SK-N-SH (cell line): ENCODE measurements at regions of chr12 and their contacts with region 1.

Region 1: DNA sequence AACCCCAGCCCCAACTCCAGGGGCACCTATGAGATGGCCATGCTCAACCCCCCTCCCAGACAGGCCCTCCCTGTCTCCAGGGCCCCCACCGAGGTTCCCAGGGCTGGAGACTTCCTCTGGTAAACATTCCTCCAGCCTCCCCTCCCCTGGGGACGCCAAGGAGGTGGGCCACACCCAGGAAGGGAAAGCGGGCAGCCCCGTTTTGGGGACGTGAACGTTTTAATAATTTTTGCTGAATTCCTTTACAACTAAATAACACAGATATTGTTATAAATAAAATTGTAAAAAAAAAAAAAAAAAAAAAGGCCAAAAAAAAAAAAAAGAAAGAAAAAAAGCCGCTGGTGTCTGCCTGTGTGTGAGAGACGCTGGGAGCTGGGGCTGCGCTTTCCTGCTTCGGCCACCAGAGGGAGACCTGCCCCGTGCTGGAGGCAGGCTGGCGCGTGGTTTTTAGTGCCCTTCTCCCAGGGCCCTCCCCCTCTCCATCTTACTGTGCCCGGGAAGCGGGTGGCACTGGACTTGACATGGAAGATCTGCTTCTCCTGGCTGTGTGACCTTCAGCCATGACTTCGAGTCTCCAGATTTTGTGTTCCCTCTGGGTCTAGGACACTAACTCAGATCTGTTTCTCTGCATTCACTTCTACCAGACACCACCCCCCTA is 3.4 kb upstream of the NXPH4 start:
- DNase-seq: peak; percentile 96
- H3K4me3 ChIP-seq: no peak overlapping the region; a peak in 1 of 4 replicates
- H3K27ac ChIP-seq: no peak overlapping the region
- H3K4me1 ChIP-seq: peaks cover 0 to 27% of the 10 kb centered on the region in 2 experiments; a peak in 1 of 4 replicates
- H3K27me3 ChIP-seq: peaks cover 14% of the 10 kb centered on the region
- CTCF ChIP-seq: peak; percentile 92
- EP300 ChIP-seq: no peak
- RAD21 ChIP-seq: peak; percentile 81

Region 2: DNA sequence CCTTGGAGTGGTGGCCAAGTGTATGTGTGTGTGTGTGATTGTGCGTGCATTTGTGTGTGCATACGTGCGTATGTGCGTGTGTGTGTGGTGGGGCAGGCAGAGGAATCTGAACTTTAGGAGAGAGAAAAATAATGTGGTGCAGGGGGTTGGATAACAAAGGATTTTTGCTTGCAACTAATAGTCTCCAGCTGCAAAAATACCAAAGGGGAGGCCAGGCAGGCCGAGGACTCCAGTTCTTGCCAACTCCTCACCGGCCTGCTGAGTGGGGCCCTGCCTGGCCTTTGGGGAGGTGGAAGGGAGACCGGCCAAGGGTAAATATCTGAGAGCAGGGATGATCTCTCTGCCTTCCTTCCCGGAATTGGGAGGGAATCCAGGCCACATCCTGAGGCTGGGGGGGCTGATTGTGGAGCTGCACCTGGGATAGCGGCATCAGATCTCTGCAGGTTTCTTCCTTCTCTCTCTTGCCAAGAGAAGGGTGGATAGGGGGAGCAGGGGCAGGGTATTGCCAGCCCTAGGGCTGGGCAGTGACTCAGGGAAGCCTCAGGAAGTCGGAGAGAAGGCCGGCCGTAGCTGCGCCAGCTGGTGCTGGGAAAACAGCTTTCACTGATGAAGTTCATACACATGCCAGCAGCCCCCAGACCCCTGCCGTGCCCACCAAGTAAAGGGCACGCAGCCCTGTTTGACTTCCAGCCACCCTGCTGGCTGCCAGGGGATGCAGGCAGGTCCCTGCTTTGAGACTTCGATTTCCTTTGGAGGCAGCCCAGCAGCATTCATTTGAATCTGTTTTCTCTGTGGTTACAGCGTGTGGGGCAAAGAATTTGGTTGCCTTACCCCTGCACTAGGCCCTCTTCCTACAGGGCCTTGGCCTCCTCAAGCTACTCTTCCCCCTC is 61.2 kb before region 1 on chr12:
- CTCF ChIA-PET with region 1: interaction called, 17 read pairs
- POLR2A ChIA-PET with region 1: no interaction called
- DNase-seq: peak; percentile 62
- H3K4me3 ChIP-seq: peak overlapping the region in 1 of 2 experiments; percentile 14; a peak in 1 of 4 replicates
- H3K27ac ChIP-seq: peak overlapping the region; percentile 84 to 97
- H3K4me1 ChIP-seq: peaks cover 33 to 63% of the 10 kb centered on the region in 2 experiments
- H3K27me3 ChIP-seq: no peaks in the 10 kb centered on the region
- CTCF ChIP-seq: no peak
- EP300 ChIP-seq: no peak
- RAD21 ChIP-seq: no peak

Region 3: GRCh38 chr12:57182921-57183790 is 30.0 kb before region 1 on chr12:
- CTCF ChIA-PET with region 1: interaction called, 20 read pairs
- POLR2A ChIA-PET with region 1: no interaction called
- DNase-seq: peak; percentile 96
- H3K4me3 ChIP-seq: no peak overlapping the region
- H3K27ac ChIP-seq: no peak overlapping the region
- H3K4me1 ChIP-seq: no peaks in the 10 kb centered on the region
- H3K27me3 ChIP-seq: no peaks in the 10 kb centered on the region
- CTCF ChIP-seq: peak; percentile 87
- EP300 ChIP-seq: no peak
- RAD21 ChIP-seq: peak; percentile 90

Region 4: GRCh38 chr12:57190037-57190436 is 23.1 kb before region 1 on chr12:
- CTCF ChIA-PET with region 1: interaction called, 48 read pairs
- POLR2A ChIA-PET with region 1: no interaction called
- DNase-seq: no peak
- H3K4me3 ChIP-seq: no peak overlapping the region
- H3K27ac ChIP-seq: no peak overlapping the region
- H3K4me1 ChIP-seq: no peaks in the 10 kb centered on the region
- H3K27me3 ChIP-seq: no peaks in the 10 kb centered on the region
- CTCF ChIP-seq: no peak
- EP300 ChIP-seq: no peak
- RAD21 ChIP-seq: no peak

Region 5: DNA sequence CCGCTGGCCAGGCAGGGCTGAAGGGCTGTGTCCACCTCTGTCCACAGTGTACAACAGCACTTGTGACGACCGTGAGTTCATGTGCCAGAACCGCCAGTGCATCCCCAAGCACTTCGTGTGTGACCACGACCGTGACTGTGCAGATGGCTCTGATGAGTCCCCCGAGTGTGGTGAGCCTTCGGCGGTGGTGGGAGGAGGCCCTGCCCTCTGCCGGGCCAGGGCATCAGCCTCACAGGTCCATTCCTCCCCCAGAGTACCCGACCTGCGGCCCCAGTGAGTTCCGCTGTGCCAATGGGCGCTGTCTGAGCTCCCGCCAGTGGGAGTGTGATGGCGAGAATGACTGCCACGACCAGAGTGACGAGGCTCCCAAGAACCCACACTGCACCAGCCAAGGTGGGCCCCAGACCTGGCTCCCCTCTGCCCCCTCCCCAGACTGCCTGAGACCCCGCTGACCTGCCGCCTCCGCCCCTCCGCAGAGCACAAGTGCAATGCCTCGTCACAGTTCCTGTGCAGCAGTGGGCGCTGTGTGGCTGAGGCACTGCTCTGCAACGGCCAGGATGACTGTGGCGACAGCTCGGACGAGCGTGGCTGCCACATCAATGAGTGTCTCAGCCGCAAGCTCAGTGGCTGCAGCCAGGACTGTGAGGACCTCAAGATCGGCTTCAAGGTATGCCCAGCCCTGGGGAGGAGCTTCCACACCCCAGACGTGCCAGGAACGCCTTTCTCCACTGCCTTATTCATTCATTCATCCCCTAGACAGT is 17.4 kb before region 1 on chr12:
- CTCF ChIA-PET with region 1: interaction called, 48 read pairs
- POLR2A ChIA-PET with region 1: no interaction called
- DNase-seq: no peak
- H3K4me3 ChIP-seq: no peak overlapping the region
- H3K27ac ChIP-seq: no peak overlapping the region
- H3K4me1 ChIP-seq: no peaks in the 10 kb centered on the region
- H3K27me3 ChIP-seq: no peaks in the 10 kb centered on the region
- CTCF ChIP-seq: no peak
- EP300 ChIP-seq: no peak
- RAD21 ChIP-seq: no peak

Region 6: GRCh38 chr12:57261428-57261865 is 48.3 kb after region 1 on chr12:
- CTCF ChIA-PET with region 1: interaction called, 25 read pairs
- POLR2A ChIA-PET with region 1: no interaction called
- DNase-seq: no peak
- H3K4me3 ChIP-seq: no peak overlapping the region
- H3K27ac ChIP-seq: no peak overlapping the region; a peak in 1 of 4 replicates
- H3K4me1 ChIP-seq: peaks cover 0 to 11% of the 10 kb centered on the region in 2 experiments; a peak in 1 of 4 replicates
- H3K27me3 ChIP-seq: no peaks in the 10 kb centered on the region
- CTCF ChIP-seq: no peak
- EP300 ChIP-seq: no peak
- RAD21 ChIP-seq: no peak

Region 7: GRCh38 chr12:57280211-57281062 is 67.2 kb after region 1 on chr12:
- CTCF ChIA-PET with region 1: interaction called, 11 read pairs
- POLR2A ChIA-PET with region 1: no interaction called
- DNase-seq: no peak
- H3K4me3 ChIP-seq: peak overlapping the region in 1 of 2 experiments; percentile 30; a peak in 2 of 4 replicates
- H3K27ac ChIP-seq: peak overlapping the region; percentile 32 to 84
- H3K4me1 ChIP-seq: peaks cover 2 to 13% of the 10 kb centered on the region in 2 experiments; a peak in 2 of 4 replicates
- H3K27me3 ChIP-seq: no peaks in the 10 kb centered on the region
- CTCF ChIP-seq: no peak
- EP300 ChIP-seq: peak in 1 of 2 experiments; percentile 45; a peak in 1 of 4 replicates
- RAD21 ChIP-seq: no peak

Region 8: GRCh38 chr12:57657744-57658143 is 444.6 kb after region 1 on chr12:
- CTCF ChIA-PET with region 1: no interaction called
- POLR2A ChIA-PET with region 1: no interaction called
- DNase-seq: no peak
- H3K4me3 ChIP-seq: no peak overlapping the region
- H3K27ac ChIP-seq: no peak overlapping the region
- H3K4me1 ChIP-seq: no peaks in the 10 kb centered on the region
- H3K27me3 ChIP-seq: 0 out of 2 replicates have a peak, but pooled peaks cover 5% of the 10 kb centered on the region
- CTCF ChIP-seq: no peak
- EP300 ChIP-seq: no peak
- RAD21 ChIP-seq: no peak